ENCODE measurements at regions of chr10 and their contacts with region 1.

Region 1: DNA sequence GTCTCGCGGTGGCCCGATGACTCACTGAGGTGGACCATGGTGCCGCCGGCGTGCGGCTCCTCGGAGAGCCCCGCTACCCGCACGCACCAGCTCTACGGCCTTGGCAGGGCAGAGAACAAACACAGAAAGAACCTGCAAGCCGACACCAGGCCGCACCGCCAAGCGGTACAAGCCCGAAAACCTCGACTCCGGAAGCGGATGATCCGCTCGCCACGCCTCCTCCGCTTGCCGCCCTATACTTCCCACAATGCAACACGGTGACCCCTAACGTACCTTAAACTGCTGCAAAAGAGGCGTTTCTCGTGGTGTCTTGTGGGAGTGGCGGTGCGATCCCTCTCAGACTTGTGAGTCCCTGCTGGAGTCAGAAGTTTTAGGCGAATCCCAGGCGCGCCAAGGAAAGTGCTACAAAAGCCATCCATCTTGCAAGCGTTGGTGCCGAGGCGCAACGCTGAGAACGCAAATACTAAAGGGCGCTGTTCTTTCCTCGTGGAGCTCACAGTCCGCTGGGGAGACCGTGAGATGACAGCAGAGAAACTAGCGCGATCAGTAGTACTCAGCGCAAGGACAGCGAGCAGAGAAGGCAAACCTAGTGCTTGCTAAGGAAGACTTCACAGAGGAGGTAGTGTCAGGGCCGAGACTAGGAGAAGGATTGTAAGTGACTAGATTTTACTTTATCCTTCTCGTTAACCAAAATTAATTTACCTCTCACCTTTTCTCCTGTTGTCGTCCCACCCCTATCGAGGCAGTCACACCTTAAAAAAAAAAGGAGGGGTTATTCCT is at the start of gene MRPS16:
- DNase-seq: peak; percentile 90
- CTCF ChIP-seq: no peak

Region 2: DNA sequence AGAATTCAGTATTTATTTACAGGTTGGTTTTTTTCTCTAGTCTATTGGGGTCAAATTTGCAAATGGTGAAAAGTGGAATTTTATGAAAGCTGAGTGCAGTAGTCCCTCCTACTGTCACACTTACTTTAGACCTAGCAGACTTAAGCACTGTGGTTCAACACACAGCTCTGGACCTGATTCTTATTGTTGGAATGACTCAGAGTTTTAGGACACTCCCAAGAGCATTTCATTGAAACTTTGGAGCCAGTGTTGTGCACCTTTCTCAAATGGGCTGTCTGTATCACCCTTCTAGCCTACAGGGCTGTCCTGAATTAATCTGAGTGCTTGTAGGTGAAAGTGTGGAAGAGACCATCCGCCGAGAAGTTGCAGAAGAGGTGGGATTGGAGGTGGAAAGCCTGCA is 126.3 kb before region 1 on chr10:
- in situ Hi-C with region 1: no loop called
- DNase-seq: no peak
- CTCF ChIP-seq: no peak

Region 3: GRCh38 chr10:73167783-73168464 is 84.7 kb before region 1 on chr10 and contains the starts of genes ECD and FAM149B1:
- in situ Hi-C with region 1: no loop called
- DNase-seq: peak; percentile 92
- CTCF ChIP-seq: peak; percentile 24

Region 4: DNA sequence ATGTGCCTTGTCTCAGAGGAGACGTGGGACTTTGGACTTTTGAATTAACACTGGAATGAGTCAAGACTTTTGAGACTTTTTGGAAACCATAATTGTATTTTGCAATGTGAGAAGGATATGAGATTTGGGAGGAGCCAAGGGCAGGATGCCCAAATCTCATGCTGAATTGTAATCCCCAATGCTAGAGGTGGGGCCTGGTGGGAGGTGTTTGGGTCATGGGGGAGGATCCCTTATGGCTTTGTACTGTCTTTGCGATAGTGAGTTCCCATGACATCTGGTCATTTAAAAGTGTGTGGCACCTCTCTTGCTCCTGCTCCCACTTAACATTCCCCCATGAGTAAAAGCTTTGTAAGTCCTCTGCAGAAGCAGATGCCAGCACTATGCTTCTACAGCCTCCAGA is 44.8 kb before region 1 on chr10:
- in situ Hi-C with region 1: no loop called
- DNase-seq: no peak
- CTCF ChIP-seq: no peak

Region 5: GRCh38 chr10:73625884-73626752 is 373.5 kb after region 1 on chr10:
- in situ Hi-C with region 1: loop called (anchors 25 kb)
- DNase-seq: peak; percentile 96
- CTCF ChIP-seq: no peak

Region 6: GRCh38 chr10:74103560-74104248 is 851.1 kb after region 1 on chr10:
- in situ Hi-C with region 1: no loop called
- DNase-seq: peak; percentile 69
- CTCF ChIP-seq: peak; percentile 72

Measured in GM13977 (cell line).